Gastrocnemius medialis (tissue), 4 donors: ENCODE measurements at regions of chr12 and their contacts with region 1.

Region 1: DNA sequence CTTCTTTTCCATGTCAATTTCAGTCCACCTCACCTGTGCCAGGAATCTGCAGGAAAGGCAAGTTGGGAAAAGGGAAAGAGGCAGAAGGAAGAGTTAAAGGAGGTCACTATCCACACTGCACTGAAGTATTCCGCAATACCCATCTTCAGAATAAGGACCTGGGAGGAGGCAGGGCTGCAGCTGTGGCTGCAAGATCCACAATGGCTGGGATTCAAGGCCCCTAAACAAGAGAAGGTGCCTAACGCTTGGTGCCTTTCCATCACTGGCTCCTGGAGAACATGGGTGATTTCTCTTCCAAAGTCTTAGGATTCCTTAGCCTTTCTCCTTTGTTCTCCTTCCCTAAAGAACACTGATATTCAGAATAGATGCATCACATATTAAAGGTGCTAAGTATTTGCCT is 204.0 kb downstream of the GRIN2B start:
- DNase-seq: no peak
- ATAC-seq: no peak
- H3K4me3 ChIP-seq: no peak overlapping the region
- H3K27ac ChIP-seq: no peak overlapping the region
- H3K4me1 ChIP-seq: no peaks in the 10 kb centered on the region
- H3K27me3 ChIP-seq: no peaks in the 10 kb centered on the region
- CTCF ChIP-seq: no peak
- POLR2A ChIP-seq: no peak

Region 2: DNA sequence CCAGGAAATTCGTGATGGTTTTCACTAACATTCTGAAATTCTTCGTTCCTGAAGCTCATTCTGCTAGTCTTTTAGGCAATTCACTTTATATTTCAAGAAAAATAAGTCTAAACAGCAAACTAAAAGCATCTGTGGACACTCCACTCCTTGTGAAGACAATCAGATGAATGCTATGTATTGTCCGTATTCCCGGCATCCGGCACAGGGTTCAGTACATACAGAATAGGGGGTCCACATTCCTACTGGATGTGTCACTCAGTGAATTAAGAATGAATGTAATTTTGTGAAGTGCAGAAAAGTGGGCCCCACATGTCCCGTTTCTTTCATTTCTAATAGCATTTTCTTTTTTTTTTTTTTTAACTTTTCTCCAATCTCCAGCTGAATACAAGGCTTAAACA is 37.2 kb before region 1 on chr12:
- in situ Hi-C with region 1: no loop called
- intact Hi-C with region 1: no loop called
- DNase-seq: no peak
- ATAC-seq: no peak
- H3K4me3 ChIP-seq: no peak overlapping the region
- H3K27ac ChIP-seq: no peak overlapping the region
- H3K4me1 ChIP-seq: no peaks in the 10 kb centered on the region
- H3K27me3 ChIP-seq: no peaks in the 10 kb centered on the region
- CTCF ChIP-seq: no peak
- POLR2A ChIP-seq: no peak

Region 3: DNA sequence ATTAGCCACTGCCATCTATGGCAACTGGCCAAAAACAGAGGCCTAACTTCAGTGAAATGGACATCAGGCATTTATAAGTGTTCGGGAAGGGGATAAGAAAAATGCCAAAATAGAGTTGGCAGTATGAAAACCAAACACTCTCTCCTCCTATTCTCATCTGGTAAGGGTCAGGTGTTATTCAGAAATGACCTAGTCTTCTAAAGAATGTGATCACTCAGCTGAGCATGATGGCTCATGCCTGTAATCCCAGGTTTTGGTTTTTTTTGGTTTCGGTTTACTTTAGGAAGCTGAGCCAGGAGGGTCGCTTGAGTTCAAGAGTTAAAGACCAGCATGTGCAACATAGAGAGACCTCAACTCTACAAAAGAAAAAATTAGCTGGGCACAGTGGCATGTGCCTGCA is 33.7 kb after region 1 on chr12:
- in situ Hi-C with region 1: no loop called
- intact Hi-C with region 1: loop called (anchors 1 kb)
- DNase-seq: no peak
- ATAC-seq: no peak
- H3K4me3 ChIP-seq: no peak overlapping the region
- H3K27ac ChIP-seq: no peak overlapping the region
- H3K4me1 ChIP-seq: no peaks in the 10 kb centered on the region
- H3K27me3 ChIP-seq: no peaks in the 10 kb centered on the region
- CTCF ChIP-seq: no peak
- POLR2A ChIP-seq: no peak